Caco-2 (cell line): ENCODE measurements at regions of chr20 and their contacts with region 1.

Region 1: DNA sequence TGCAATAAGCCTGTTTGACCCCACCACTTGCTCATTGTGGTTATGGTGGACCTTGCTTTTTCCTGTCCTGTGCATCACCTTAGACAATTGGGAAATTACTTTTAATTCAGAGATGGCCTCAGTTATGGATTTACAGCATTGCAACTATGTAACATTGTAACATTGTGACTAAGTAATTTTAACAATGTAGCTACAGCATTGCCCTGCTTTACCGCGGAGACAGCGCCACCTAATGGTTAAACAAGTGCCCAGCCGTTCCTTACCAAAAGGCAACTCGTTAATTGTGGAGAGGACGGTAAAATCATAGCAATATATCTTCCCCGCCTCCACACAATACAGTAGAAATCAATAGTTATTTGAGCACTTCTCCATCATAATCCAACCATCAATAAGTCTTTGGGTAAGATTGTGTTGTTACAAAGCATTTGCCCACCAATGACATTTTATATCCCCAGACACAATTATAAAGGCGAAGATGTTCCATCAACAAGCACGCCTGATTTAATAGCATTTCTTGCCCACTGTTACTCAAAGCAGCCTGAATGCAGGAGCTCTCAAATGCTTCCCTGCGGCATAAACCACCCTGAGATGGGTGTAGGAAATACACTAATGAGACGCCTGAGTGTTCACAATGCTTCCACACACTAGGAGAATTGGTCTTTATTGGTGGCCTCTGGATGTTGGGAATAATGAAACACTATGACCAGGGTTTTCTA is 93.7 kb downstream of the PROKR2 start:
- DNase-seq: peak; percentile 66 to 70
- H3K4me3 ChIP-seq: no peak overlapping the region
- H3K4me3 Mint-ChIP-seq: no peak overlapping the region
- H3K27ac Mint-ChIP-seq: no peak overlapping the region
- H3K4me1 ChIP-seq: no peaks in the 10 kb centered on the region
- H3K4me1 Mint-ChIP-seq: peaks cover 7% of the 10 kb centered on the region
- H3K27me3 ChIP-seq: no peaks in the 10 kb centered on the region
- H3K27me3 Mint-ChIP-seq: no peaks in the 10 kb centered on the region
- CTCF ChIP-seq: peak; percentile 81 to 91

Region 2: GRCh38 chr20:5205348-5206210 is 17.5 kb before region 1 on chr20:
- CTCF ChIA-PET with region 1: interaction called, 42 read pairs
- POLR2A ChIA-PET with region 1: no interaction called
- intact Hi-C with region 1: loop called (anchors 1 kb)
- DNase-seq: peak; percentile 84 to 86
- H3K4me3 ChIP-seq: no peak overlapping the region
- H3K4me3 Mint-ChIP-seq: no peak overlapping the region
- H3K27ac Mint-ChIP-seq: no peak overlapping the region
- H3K4me1 ChIP-seq: no peaks in the 10 kb centered on the region
- H3K4me1 Mint-ChIP-seq: no peaks in the 10 kb centered on the region
- H3K27me3 ChIP-seq: no peaks in the 10 kb centered on the region
- H3K27me3 Mint-ChIP-seq: no peaks in the 10 kb centered on the region
- CTCF ChIP-seq: peak; percentile 92 to 95

Region 3: DNA sequence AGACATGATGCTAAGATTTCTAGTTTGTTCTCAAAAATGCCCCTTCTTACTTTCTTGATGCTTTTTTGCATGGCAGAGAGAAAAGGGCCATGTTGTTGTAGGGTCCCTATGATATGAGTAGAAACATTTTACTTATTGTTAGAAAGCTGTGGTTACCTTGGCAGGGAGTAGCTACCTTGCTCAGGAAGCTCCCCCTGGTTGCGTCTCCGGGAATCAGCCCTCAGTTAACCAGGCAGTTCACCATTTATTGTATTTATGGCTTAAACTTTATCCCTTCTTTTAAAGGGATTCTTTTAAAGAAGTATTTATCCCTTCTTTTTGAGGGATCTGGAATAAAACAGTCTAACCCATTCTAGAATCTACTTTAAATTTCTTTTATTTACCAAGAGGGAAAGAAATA is 207.6 kb after region 1 on chr20:
- CTCF ChIA-PET with region 1: interaction called, 10 read pairs
- POLR2A ChIA-PET with region 1: no interaction called
- intact Hi-C with region 1: no loop called
- DNase-seq: no peak
- H3K4me3 ChIP-seq: no peak overlapping the region
- H3K4me3 Mint-ChIP-seq: no peak overlapping the region
- H3K27ac Mint-ChIP-seq: no peak overlapping the region
- H3K4me1 ChIP-seq: no peaks in the 10 kb centered on the region
- H3K4me1 Mint-ChIP-seq: no peaks in the 10 kb centered on the region
- H3K27me3 ChIP-seq: peaks cover 1% of the 10 kb centered on the region
- H3K27me3 Mint-ChIP-seq: peaks cover 13% of the 10 kb centered on the region
- CTCF ChIP-seq: peak in 1 of 2 experiments; percentile 38